Activated CD4-positive, alpha-beta memory T cell treated with anti-CD3 and anti-CD28 coated beads, Interleukin-2, amount 10 ng/mL, durations not matched to agents 7 days and 5 days (primary cell): ENCODE measurements at regions of chr17 and their contacts with region 1.

Region 1: DNA sequence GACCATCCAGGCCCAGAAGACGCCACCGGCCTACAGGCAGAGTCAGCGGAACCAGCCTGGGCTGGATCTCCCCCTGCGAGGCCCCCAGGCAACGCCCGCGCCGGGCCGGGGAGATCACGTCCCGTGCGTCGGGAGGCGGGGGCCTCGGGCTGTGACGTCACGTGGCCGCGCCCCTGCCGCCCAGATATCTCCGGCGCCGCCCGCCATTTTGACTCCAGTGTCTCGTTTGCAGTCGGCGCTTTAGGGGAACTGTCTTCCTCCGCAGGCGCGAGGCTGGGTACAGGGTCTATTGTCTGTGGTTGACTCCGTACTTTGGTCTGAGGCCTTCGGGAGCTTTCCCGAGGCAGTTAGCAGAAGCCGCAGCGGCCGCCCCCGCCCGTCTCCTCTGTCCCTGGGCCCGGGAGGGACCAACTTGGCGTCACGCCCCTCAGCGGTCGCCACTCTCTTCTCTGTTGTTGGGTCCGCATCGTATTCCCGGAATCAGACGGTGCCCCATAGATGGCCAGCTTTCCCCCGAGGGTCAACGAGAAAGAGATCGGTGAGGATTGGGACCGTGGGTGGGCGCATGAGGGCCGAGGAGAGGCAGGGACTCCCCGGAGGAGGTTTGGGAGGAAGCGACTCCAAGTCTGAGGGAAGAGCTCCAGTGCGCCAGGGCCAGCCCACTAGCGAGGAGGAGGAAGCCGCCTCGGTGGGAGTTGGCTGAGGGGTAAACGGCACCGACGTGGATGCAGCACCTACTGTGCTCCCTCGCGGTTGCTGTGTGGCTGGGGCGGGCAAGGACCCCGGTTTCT is at the start of gene WSB1:
- DNase-seq: peak; percentile 93
- H3K4me3 Mint-ChIP-seq: peak within 1 kb of the TSS; percentile 99
- H3K27ac Mint-ChIP-seq: peak within 1 kb of the TSS; percentile 98
- H3K4me1 Mint-ChIP-seq: peaks cover 36% of the 10 kb centered on the region
- H3K27me3 Mint-ChIP-seq: no peaks in the 10 kb centered on the region
- total RNA-seq, gene WSB1: 143 to 155 TPM

Region 2: DNA sequence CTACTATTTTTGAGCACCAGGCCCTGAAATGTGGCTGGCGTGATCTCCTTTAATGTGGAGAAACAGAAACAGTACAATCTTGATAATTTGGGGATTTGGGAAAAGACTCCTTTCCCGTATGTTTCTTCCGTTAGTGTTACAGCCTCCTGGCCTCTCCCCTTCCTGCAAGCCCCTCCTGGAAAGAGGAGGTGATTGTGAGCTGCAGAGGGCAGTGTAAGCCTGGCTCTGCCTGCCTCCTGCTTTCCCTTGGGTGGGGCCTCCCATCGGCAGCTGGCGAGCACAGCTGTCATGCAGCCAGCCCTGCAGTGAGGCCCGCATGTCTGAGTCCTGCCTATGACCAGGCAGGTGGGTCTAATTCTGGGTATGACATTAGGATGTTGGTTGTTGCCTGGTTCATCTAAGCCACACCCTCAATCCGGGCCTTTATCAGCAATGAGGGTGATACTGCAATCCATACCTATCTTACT is 48.8 kb before region 1 on chr17:
- CTCF ChIA-PET with region 1: interaction called, 5 read pairs
- POLR2A ChIA-PET with region 1: interaction called, 10 read pairs
- DNase-seq: peak; percentile 46
- H3K4me3 Mint-ChIP-seq: no peak overlapping the region
- H3K27ac Mint-ChIP-seq: no peak overlapping the region
- H3K4me1 Mint-ChIP-seq: peaks cover 26% of the 10 kb centered on the region
- H3K27me3 Mint-ChIP-seq: peaks cover 16% of the 10 kb centered on the region

Region 3: DNA sequence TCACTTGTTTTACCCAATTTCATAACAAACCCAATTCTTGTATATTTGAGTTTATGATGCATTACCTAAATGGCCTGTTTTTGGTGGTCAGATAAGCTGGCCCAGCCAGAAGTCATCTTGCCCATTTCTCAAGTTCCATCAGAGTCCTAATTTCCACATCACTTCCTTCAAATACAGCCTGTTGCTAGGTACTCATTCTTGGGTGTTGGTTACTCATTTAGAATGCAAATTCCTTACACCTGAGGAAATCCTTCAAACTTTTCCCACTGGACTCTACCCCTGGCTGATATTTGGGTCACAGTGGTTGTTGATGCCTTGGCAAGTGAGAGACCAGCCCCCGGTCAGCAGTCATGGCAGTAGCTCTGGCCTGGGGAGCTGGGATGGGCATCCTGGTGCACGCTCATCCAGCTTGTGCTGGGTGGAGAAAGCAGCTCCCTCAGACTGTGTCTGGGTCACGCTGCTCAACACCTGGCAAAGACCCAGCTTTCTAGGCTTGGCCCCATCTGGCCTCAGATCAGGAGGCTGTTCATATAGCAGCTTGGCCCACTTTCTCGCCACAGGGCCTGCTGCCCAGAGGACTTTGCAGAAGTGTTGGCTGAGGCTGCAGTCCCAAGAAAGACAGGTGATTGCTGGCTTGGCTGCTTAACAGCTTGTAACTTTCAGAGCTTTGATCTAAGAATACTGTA is 25.6 kb after region 1 on chr17:
- CTCF ChIA-PET with region 1: interaction called, 3 read pairs
- POLR2A ChIA-PET with region 1: interaction called, 21 read pairs
- DNase-seq: no peak
- H3K4me3 Mint-ChIP-seq: no peak overlapping the region
- H3K27ac Mint-ChIP-seq: no peak overlapping the region
- H3K4me1 Mint-ChIP-seq: no peaks in the 10 kb centered on the region
- H3K27me3 Mint-ChIP-seq: no peaks in the 10 kb centered on the region

Region 4: GRCh38 chr17:27413792-27414191 is 119.7 kb after region 1 on chr17:
- CTCF ChIA-PET with region 1: no interaction called
- POLR2A ChIA-PET with region 1: no interaction called
- DNase-seq: no peak
- H3K4me3 Mint-ChIP-seq: no peak overlapping the region
- H3K27ac Mint-ChIP-seq: no peak overlapping the region
- H3K4me1 Mint-ChIP-seq: no peaks in the 10 kb centered on the region
- H3K27me3 Mint-ChIP-seq: peaks cover 4% of the 10 kb centered on the region

Region 5: GRCh38 chr17:27466743-27467375 is 172.8 kb after region 1 on chr17:
- CTCF ChIA-PET with region 1: interaction called, 3 read pairs
- POLR2A ChIA-PET with region 1: interaction called, 25 read pairs
- DNase-seq: peak; percentile 85
- H3K4me3 Mint-ChIP-seq: peak overlapping the region; percentile 61
- H3K27ac Mint-ChIP-seq: peak overlapping the region; percentile 89
- H3K4me1 Mint-ChIP-seq: peaks cover 86% of the 10 kb centered on the region
- H3K27me3 Mint-ChIP-seq: no peaks in the 10 kb centered on the region

Region 6: GRCh38 chr17:27601069-27601975 is 307.2 kb after region 1 on chr17:
- CTCF ChIA-PET with region 1: interaction called, 12 read pairs
- POLR2A ChIA-PET with region 1: interaction called, 6 read pairs
- DNase-seq: peak; percentile 82
- H3K4me3 Mint-ChIP-seq: no peak overlapping the region
- H3K27ac Mint-ChIP-seq: no peak overlapping the region
- H3K4me1 Mint-ChIP-seq: peaks cover 11% of the 10 kb centered on the region
- H3K27me3 Mint-ChIP-seq: no peaks in the 10 kb centered on the region